Activated naive CD4-positive, alpha-beta T cell treated with anti-CD3 and anti-CD28 coated beads for 36 hours (primary cell): ENCODE measurements at regions of chr15 and their contacts with region 1.

Region 1: DNA sequence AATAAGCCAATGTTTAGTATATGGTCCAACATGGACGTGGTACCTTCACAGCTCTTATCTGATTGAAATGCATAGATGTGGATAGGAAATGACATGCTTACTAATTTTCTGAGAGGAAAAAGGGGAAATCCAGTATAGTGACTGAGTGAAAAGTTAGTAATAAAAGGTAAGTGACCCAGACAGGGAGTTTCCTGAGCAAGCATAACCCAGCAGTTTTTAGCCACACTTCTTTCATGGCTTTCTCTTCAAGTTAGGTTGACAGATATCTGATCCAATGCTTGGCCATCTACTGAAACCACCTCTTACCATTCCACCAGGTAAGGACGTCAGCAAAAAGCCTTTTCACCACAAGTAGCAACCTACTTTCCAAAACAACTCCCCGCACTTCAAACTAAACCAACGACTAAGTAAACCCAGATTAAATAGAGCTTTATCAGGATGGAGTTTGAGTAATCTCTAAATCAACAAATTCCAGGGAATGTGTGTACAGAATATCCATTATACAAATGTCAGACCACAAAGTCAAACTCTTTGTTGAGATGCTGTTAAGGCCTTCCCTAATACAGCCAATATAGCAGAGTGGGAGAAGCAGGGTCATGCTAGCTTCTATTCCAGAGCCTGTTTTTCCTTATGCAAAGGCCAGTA is 329.7 kb downstream of the RORA start:
- DNase-seq: peak; percentile 60
- H3K4me3 Mint-ChIP-seq: no peak overlapping the region
- H3K27ac Mint-ChIP-seq: peak overlapping the region; percentile 74
- H3K4me1 Mint-ChIP-seq: peaks cover 63% of the 10 kb centered on the region
- H3K27me3 Mint-ChIP-seq: no peaks in the 10 kb centered on the region

Region 2: GRCh38 chr15:60580650-60581376 is 318.6 kb before region 1 on chr15:
- CTCF ChIA-PET with region 1: interaction called, 6 read pairs
- intact Hi-C with region 1: loop called (anchors 1 kb)
- DNase-seq: peak; percentile 73
- H3K4me3 Mint-ChIP-seq: peak overlapping the region; percentile 60
- H3K27ac Mint-ChIP-seq: peak overlapping the region; percentile 85
- H3K4me1 Mint-ChIP-seq: peaks cover 90% of the 10 kb centered on the region
- H3K27me3 Mint-ChIP-seq: no peaks in the 10 kb centered on the region

Region 3: DNA sequence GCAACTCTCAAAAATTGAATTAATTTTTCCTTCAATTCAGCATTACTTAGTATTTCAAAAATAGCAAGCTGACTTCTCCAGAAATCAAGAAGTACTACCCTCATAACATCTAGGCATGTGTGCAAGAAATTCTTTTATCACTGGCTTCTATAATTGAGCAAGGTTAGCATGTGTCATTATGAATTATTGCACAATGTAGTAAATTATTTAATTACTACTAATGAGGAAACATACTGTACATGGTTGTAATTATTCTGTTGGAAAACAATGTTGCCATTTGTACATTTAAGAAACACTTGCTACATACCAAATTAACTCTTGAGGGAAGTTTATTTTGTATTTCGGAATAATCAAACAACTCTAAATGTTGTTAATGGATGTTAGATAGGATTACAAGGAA is 298.3 kb before region 1 on chr15:
- CTCF ChIA-PET with region 1: no interaction called
- intact Hi-C with region 1: no loop called
- DNase-seq: no peak
- H3K4me3 Mint-ChIP-seq: no peak overlapping the region
- H3K27ac Mint-ChIP-seq: no peak overlapping the region
- H3K4me1 Mint-ChIP-seq: no peaks in the 10 kb centered on the region
- H3K27me3 Mint-ChIP-seq: no peaks in the 10 kb centered on the region

Region 4: GRCh38 chr15:60720493-60721256 is 178.8 kb before region 1 on chr15:
- CTCF ChIA-PET with region 1: interaction called, 10 read pairs
- intact Hi-C with region 1: loop called (anchors 1 kb)
- DNase-seq: peak; percentile 90
- H3K4me3 Mint-ChIP-seq: peak overlapping the region; percentile 49
- H3K27ac Mint-ChIP-seq: peak overlapping the region; percentile 99
- H3K4me1 Mint-ChIP-seq: peaks cover 59% of the 10 kb centered on the region
- H3K27me3 Mint-ChIP-seq: no peaks in the 10 kb centered on the region

Region 5: GRCh38 chr15:60772395-60773120 is 126.9 kb before region 1 on chr15:
- CTCF ChIA-PET with region 1: no interaction called
- intact Hi-C with region 1: loop called (anchors 1 kb)
- DNase-seq: peak; percentile 32
- H3K4me3 Mint-ChIP-seq: no peak overlapping the region
- H3K27ac Mint-ChIP-seq: peak overlapping the region; percentile 95
- H3K4me1 Mint-ChIP-seq: peaks cover 67% of the 10 kb centered on the region
- H3K27me3 Mint-ChIP-seq: no peaks in the 10 kb centered on the region

Region 6: DNA sequence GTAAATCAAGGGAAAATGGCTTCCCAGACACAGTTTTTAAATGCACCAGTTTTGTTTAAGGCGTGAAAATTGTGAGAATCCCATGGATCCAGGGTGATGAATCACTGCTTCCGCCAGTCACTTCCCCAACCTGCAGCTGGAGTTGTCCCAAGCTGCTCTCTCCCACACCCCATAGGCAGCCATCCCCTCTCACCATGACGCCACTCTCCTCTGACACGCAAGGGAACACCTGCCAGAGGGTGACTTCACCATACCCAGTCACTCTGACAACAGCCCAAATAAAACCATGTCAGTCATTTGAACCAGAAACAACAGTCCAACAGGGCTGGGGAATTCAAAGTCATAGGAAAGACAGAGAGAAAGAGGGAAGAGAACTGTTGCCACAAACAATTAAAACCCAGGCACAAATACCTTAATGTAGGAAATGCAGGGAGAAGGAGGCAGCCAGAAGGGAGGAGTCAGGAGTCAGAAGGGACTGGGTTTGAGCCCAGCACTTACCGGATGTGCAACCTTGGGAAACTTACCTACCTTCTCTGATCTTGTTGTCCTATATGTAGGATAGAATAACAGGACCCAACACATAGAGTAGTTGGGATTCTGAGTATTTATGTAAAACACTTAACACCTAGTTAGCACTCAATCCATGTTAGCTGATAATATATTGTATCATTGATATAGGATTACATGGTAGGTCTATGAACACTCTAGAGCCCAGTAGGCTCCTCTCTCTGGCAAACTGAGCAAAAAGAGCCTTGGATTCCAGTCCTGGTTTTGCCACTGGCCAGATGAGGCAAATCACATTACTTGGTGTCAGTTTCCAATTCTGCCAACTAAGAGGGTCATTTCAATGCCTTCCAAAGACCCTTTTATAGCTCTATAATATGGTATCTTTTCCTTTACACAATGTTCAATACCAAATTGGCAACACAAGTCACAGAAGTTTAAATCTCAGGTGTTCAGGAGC is 94.2 kb before region 1 on chr15:
- CTCF ChIA-PET with region 1: interaction called, 4 read pairs
- intact Hi-C with region 1: loop called (anchors 1 kb)
- DNase-seq: no peak
- H3K4me3 Mint-ChIP-seq: no peak overlapping the region
- H3K27ac Mint-ChIP-seq: no peak overlapping the region
- H3K4me1 Mint-ChIP-seq: peaks cover 74% of the 10 kb centered on the region
- H3K27me3 Mint-ChIP-seq: no peaks in the 10 kb centered on the region

Region 7: DNA sequence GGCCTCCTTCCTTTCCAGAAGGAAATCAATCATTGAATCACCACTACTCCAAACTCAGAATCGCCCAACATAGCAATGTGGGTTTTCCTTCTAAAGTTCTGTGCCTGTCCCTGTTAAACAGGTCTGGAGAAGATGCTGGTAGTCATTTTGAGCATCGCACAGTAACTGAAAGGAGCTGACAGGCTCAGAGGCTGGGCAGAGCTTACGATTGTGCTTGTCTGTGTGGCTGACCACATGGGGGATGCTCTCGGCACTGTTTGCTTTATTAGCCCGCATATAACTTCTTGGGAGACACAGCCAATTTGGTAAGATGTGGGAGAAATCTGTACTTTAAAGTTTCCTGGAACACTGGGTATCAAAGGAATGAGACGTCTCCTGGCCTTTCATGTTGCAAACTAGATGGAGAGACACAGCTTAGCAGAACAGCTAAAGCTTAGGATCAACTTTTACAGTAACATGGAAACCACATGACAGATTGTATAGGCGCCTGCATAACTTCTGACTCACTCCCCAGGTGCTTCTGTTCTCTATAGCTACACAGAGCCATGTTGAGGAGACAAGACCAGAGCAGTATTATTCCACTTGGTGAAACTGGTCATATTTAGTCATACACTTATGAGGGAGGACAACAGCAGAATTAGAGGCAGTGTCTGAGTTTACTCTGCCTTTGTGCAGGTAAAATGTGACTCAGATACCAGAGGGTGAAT is 44.4 kb before region 1 on chr15:
- CTCF ChIA-PET with region 1: no interaction called
- intact Hi-C with region 1: loop called (anchors 1 kb)
- DNase-seq: peak; percentile 60
- H3K4me3 Mint-ChIP-seq: no peak overlapping the region
- H3K27ac Mint-ChIP-seq: peak overlapping the region; percentile 13
- H3K4me1 Mint-ChIP-seq: peaks cover 64% of the 10 kb centered on the region
- H3K27me3 Mint-ChIP-seq: no peaks in the 10 kb centered on the region

Region 8: DNA sequence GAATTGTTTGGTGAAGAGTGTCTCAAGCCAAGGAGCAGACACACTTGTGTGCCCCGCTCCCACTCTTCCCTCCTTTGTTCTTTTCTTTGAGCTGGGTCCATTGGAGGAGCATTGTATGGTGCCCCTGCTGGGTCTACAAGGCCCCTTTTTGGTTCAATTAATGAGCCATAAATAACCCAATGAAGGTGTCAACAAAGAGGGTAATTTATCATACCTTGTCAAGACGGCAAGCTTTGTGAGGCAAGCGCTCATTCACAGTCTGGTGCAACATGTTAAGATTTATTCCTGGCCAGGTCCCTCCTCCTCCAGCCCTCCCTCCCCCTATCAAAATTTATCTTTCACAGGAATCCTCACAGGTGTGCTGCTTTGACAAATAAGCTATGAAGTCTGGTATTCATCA is 29.5 kb after region 1 on chr15:
- CTCF ChIA-PET with region 1: no interaction called
- intact Hi-C with region 1: no loop called
- DNase-seq: no peak
- H3K4me3 Mint-ChIP-seq: no peak overlapping the region
- H3K27ac Mint-ChIP-seq: no peak overlapping the region
- H3K4me1 Mint-ChIP-seq: peaks cover 12% of the 10 kb centered on the region
- H3K27me3 Mint-ChIP-seq: peaks cover 12% of the 10 kb centered on the region